Dorsolateral prefrontal cortex (tissue), 120 donors: ENCODE measurements at regions of chr11 and their contacts with region 1.

Region 1: DNA sequence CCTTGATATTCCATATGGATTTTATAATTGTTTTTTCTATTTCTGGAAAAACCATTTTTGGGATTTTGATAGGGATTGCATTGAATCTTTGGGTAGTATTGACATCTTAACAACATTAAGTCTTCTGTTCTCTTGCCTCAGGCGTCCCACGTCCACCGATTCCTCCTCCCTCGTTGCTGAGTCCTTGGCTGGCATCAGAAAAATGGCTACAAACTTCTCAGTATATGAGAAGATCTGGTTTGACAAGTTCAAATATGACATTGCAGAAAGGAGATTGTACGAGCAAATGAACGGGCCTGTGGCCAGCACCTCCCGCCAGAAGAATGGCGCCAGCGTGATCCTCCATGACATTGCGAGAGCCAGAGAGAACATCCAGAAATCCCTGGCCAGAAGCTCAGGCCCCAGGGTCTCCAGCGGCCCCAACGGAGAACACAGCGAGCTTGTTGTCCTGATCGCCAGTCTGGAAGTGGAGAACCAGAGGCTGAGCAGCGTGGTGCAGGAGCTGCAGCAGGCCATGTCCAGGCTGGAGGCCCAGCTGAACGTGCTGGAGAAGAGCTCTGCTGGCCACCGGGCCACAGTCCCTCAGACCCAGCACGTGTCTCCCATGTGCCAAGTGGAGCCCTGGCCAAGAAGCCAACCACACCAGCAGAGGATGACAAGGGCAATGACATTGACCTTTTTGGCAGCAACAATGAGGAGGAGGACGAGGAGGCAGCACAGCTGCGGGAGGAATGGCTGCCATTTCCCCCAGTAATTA is 20.7 kb upstream of the SCGB1D1 start:
- DNase-seq: no peak
- H3K4me3 ChIP-seq: no peak overlapping the region
- H3K27ac ChIP-seq: no peak overlapping the region
- H3K27me3 ChIP-seq: peaks cover 0 to 5% (median 0%) of the 10 kb centered on the region in 45 donors
- CTCF ChIP-seq: no peak

Region 2: GRCh38 chr11:62309991-62310390 is 140.7 kb after region 1 on chr11:
- intact Hi-C with region 1: loop called (anchors 2 to 5 kb)
- DNase-seq: no peak
- H3K4me3 ChIP-seq: no peak overlapping the region
- H3K27ac ChIP-seq: no peak overlapping the region
- H3K27me3 ChIP-seq: peaks cover 0 to 9% (median 0%) of the 10 kb centered on the region in 45 donors
- CTCF ChIP-seq: no peak

Region 3: GRCh38 chr11:62370743-62371440 is 201.6 kb after region 1 on chr11:
- intact Hi-C with region 1: loop called in 1 of 2 experiments (anchors 5 kb)
- DNase-seq: no peak
- H3K4me3 ChIP-seq: no peak overlapping the region
- H3K27ac ChIP-seq: no peak overlapping the region
- H3K27me3 ChIP-seq: no peaks in the 10 kb centered on the region
- CTCF ChIP-seq: no peak

Region 4: DNA sequence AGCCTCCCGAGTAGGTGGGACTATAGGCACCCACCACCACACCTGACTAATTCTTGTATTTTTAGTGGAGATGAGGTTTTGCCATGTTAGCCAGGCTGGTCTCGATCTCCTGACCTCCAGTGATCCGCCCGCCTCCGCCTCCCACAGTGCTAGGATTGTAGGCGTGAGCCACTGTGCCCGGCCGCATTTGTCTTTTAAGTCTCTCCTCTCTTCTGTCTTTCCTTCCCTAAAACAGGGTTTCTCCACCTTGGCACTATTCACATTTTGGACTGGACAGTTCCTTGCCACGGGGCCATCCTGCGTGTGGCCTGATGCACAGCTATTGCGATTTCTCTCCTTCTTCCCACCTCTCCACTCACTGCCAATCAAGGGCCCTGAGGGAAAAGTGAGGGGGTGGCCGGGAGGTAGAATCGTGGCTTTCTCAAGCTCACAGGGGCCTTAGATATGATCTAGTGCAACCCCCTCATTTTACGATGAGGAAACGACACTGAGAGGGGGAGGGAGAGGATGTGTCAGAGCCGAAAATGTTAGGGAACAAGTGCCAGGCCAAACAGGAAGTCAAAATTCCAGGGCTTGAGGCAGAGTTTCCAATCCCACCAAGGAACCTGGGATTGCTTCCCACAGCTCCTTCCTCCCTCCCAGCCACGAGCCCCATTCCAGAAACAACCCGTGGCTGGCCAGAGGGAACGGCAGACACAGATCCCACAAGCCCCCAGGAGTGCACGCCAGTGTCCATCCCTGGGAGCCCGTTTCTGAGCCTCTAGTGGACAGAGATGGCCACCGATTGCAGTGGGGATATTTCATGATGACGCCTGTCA is 270.7 kb after region 1 on chr11:
- intact Hi-C with region 1: no loop called
- DNase-seq: peak in 2 of 10 donors; percentile 24 to 50
- H3K4me3 ChIP-seq: no peak overlapping the region
- H3K27ac ChIP-seq: peak overlapping the region in 15 of 59 donors; percentile 4 to 67 (median 31)
- H3K27me3 ChIP-seq: no peaks in the 10 kb centered on the region
- CTCF ChIP-seq: no peak